RWPE1 (cell line): ENCODE measurements at regions of chr6 and their contacts with region 1.

Region 1: DNA sequence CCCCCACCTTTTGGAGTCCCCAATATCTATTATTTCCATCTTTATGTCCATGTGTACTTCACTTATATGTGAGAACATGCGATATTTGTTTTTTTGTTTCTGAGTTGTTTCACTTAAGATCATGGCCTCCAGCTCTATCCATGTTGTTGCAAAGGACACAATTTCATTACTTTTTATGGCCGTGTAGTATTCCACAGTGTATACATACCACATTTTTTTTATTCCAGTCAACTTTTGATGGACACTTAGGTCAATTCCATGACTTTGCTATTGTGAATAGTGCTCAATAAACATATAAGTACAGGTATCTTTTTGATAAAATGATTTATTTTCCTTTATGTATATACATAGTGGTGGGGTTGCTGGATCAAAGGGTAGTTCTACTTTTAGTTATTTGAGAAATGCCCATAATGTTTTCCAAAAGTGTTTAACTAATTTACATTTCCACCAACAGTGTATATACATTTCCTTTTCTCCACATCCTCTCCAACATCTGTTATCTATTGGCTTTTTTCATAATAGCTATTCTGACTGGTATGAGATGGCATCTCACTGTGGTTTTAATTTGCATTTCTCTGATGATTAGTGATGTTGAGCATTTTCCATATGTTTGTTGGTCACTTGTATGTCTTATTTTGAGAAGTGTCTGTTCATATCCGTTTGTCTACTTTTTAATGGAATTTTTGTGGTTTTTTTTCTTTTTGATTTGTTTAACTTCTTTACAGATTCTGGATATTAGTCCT is 34.0 kb upstream of the COL10A1 start:
- DNase-seq: no peak
- H3K27ac ChIP-seq: no peak overlapping the region
- CTCF ChIP-seq: no peak

Region 2: GRCh38 chr6:116196841-116197240 is 36.9 kb after region 1 on chr6:
- CTCF ChIA-PET with region 1: no interaction called
- POLR2A ChIA-PET with region 1: interaction called, 12 read pairs
- DNase-seq: no peak
- H3K27ac ChIP-seq: no peak overlapping the region
- CTCF ChIP-seq: no peak